Dendritic cell treated with granulocyte-macrophage colony-stimulating factor and Interleukin-4, amounts not matched to agents 40 ng/mL and 50 ng/mL, for 4 days (primary cell): ENCODE measurements at regions of chr12 and their contacts with region 1.

Region 1: DNA sequence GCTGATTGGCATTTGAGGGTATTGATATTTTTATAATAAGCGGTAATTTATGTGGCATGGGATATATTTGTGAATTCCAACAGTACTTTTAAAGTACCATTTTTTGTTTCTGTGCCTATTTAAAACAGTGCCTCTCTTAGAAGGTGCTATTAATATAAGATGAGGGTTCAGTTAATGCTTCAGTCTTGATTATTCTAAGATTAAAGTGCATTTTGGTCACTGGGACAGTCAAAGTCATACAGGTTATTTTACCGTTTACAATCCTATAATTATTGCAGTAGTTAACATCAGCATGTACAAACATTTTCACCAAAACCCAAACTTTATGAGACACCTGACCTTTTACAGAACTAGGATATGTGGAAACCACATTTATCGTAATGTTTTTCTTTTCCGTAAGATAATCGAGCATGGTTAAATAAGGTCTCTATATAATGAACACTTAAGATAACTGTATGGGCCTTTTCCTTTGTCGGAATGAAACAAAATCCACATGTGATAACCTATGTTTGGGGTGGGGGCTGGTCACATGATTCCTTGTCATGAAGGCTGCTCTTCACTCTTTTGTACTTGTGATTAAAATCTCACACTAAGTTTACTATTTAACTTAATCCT is 37.7 kb upstream of the DNM1L start:
- H3K4me3 Mint-ChIP-seq: no peak overlapping the region
- H3K27ac Mint-ChIP-seq: no peak overlapping the region
- H3K4me1 Mint-ChIP-seq: no peaks in the 10 kb centered on the region
- H3K27me3 Mint-ChIP-seq: no peaks in the 10 kb centered on the region

Region 2: DNA sequence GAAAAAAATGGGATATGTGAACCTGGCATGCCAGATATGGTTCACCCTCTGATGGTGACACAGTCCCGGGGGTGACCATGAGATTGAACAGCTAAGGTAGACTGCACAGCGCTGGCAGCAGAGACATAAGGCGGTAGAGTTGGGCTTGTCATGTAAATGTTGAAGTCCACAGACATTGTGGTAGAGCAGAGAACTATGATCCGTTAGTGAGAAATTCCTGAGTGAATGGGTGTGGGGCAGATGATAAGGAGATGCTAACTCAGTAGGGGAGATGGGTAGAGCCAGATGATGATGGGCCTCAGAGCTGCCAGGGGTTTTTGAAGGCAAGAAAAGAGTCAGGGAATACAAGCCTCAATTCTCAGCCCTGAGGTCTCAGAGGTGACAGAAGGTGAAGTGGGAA is 13.4 kb before region 1 on chr12:
- intact Hi-C with region 1: loop called (anchors 1 kb)
- H3K4me3 Mint-ChIP-seq: no peak overlapping the region
- H3K27ac Mint-ChIP-seq: no peak overlapping the region
- H3K4me1 Mint-ChIP-seq: no peaks in the 10 kb centered on the region
- H3K27me3 Mint-ChIP-seq: no peaks in the 10 kb centered on the region